Right ventricle myocardium superior (tissue), 1 donor: ENCODE measurements at regions of chr2 and their contacts with region 1.

Region 1: GRCh38 chr2:54206596-54206995 is 49.4 kb downstream of the TSPYL6 start:
- DNase-seq: no peak
- ATAC-seq: peak; percentile 72

Region 2: DNA sequence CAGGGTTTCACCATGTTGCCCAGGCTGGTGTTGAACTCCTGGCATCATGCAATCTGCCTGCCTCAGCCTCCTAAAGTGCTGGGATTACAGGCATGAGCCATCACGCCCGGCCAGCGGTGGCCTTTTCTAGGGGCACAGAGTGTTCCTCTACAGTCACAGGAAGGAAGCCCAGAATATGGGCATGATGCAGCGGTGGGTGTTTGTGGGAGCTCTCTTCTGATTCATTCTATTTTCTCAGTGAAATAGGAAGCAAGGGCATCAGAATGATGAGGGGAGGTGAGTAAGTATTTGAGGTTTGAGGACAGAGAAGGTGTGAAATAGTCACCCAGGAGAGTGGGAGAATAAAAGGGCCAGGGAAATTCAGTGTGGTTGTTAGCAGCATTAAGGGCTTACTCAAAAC is 165.5 kb before region 1 on chr2:
- intact Hi-C with region 1: no loop called
- DNase-seq: no peak
- ATAC-seq: no peak

Region 3: GRCh38 chr2:54240515-54241469 is 34.2 kb after region 1 on chr2:
- intact Hi-C with region 1: no loop called
- DNase-seq: peak; percentile 53
- ATAC-seq: peak; percentile 88

Region 4: GRCh38 chr2:54329482-54330161 is 123.0 kb after region 1 on chr2:
- intact Hi-C with region 1: loop called (anchors 10 kb)
- DNase-seq: no peak
- ATAC-seq: no peak

Region 5: DNA sequence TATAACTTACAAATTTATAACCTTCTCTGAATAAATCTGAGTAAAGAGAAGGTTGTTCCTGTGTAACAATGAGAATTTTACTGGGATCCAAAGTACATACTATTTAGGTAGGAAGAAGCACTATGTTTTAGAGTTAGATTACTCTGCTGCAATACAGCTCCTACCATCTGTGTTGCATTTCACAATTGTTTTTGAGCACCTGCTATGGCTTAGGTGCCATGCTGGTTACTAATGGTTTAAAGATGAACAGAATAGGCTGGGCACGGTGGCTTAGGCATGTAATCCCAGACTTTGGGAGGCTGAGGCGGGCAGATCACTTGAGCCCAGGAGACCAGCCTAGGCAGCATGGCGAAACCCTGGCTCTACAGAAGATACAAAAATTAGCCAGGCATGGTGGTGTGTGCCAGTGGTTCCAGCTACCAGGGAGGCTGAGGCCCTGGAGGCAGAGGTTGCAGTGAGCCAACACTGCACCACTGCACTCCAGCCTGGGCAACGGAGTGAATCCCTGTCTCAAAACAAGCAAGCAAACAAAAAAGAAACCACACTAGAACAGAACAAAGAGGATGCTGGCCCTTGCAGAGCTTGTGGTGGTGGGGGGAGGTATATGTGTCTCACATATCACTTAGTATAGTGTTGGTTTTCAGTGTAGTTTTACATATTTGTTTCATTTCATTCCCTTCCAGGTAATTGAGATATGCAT is 306.2 kb after region 1 on chr2:
- intact Hi-C with region 1: loop called (anchors 10 kb)
- DNase-seq: no peak
- ATAC-seq: peak; percentile 4